ENCODE measurements at regions of chr5 and their contacts with region 1.

Region 1: DNA sequence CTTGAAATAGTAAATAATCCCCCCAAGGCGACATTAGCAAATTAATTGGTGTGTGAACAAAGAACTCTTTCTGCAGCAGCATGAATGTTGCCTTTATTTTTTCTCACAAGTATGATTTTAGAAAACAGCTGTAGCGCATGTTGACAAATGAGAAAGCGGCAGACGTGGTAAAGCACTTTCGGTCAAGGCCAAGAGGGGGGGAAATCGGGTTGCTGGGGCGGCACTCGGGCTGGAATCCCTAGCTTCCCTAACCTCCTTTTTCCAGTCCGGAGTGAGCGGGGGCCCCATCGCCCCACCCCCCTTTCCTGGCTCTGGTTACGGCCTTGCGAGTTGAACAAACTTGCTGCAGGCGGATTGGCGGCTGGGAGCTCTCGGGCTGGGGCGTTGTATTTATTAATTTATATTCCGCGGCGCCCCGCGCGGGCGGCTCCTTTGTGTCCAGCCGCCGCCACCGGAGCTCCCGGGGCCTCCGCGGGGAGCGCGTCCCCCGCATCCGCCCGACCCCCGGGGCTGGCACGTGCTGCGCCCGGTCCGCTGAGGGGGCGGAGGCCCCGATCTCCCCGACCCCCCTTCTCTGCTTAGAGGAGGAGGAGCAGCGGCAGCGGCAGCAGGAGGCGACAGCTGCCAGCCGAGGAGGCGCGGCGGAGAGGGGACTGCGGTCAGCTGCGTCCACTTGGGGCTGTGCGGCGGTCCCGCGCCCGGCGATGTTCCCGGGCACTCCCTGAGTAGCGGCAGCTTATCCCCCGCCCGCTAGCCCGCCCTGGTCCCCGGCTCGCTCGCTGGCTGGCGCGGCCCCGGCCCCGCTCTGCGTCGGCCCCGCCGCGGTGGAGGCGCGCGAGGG is at the start of gene RHOBTB3:
- DNase-seq: peak; percentile 80
- H3K4me3 ChIP-seq: peak within 1 kb of the TSS; percentile 91
- H3K27ac ChIP-seq: peak within 1 kb of the TSS; percentile 88
- H3K27me3 ChIP-seq: no peaks in the 10 kb centered on the region
- CTCF ChIP-seq: no peak
- polyA plus RNA-seq, gene RHOBTB3: 303 and 360 TPM in 2 replicates

Region 2: DNA sequence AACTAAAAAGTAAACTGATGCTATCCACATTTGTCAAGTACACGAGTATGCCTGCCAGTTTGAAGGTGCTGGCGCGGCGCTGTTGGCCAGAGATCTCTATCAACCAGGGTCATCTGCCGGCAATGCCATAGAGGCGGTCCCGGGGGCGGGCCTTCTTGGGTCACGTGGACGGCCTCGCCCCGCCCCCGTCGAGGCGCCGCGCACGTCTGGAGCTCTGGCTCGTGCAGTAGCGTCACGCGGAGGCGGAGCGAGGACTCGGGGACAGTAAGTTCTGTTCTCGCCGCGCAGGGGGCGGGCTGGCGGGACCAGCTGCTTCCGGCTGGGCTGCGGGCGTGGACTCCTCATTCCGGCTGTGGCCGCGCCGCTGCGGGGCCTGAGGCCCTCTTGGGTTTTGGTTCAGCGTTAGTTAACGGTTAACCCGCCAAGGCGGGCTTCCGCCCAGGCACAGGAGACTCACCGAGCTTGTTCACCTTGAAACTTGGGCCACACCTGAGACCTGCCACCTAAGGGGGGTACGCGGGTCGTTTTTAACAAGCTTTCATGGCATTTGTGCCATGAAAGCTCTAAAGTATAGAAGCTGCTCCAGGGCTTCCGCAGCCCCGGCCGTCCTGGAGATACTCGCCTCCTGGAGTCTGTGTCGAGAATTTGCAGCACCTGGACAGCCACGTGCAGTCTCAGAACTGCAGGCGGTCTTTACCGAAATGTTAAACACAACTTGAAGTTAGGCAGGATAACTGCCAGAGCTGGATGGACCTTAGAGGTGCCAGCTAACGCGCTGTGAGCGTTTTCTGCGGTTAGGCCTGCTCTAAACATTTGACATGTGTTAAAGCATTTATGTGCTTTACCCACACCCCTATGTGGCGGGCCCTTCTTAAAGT is 84.2 kb before region 1 on chr5 and contains the start of gene RFESD:
- CTCF ChIA-PET with region 1: interaction called, 5 read pairs
- POLR2A ChIA-PET with region 1: interaction called, 33 read pairs
- DNase-seq: peak; percentile 82
- H3K4me3 ChIP-seq: peak within 1 kb of the TSS; percentile 61
- H3K27ac ChIP-seq: peak within 1 kb of the TSS; percentile 82
- H3K27me3 ChIP-seq: no peaks in the 10 kb centered on the region
- CTCF ChIP-seq: 0 out of 2 replicates have a peak, but pooled peaks have one; percentile 18
- polyA plus RNA-seq, gene RFESD: 3.0 and 3.8 TPM in 2 replicates

Region 3: GRCh38 chr5:95669540-95669939 is 61.4 kb before region 1 on chr5:
- CTCF ChIA-PET with region 1: interaction called, 31 read pairs
- POLR2A ChIA-PET with region 1: interaction called, 20 read pairs
- DNase-seq: peak; percentile 97
- H3K4me3 ChIP-seq: no peak overlapping the region
- H3K27ac ChIP-seq: peak overlapping the region; percentile 71
- H3K27me3 ChIP-seq: no peaks in the 10 kb centered on the region
- CTCF ChIP-seq: no peak

Region 4: GRCh38 chr5:95715799-95716461 is 15.0 kb before region 1 on chr5:
- CTCF ChIA-PET with region 1: no interaction called
- POLR2A ChIA-PET with region 1: no interaction called
- DNase-seq: no peak
- H3K4me3 ChIP-seq: no peak overlapping the region
- H3K27ac ChIP-seq: no peak overlapping the region
- H3K27me3 ChIP-seq: no peaks in the 10 kb centered on the region
- CTCF ChIP-seq: no peak

Region 5: DNA sequence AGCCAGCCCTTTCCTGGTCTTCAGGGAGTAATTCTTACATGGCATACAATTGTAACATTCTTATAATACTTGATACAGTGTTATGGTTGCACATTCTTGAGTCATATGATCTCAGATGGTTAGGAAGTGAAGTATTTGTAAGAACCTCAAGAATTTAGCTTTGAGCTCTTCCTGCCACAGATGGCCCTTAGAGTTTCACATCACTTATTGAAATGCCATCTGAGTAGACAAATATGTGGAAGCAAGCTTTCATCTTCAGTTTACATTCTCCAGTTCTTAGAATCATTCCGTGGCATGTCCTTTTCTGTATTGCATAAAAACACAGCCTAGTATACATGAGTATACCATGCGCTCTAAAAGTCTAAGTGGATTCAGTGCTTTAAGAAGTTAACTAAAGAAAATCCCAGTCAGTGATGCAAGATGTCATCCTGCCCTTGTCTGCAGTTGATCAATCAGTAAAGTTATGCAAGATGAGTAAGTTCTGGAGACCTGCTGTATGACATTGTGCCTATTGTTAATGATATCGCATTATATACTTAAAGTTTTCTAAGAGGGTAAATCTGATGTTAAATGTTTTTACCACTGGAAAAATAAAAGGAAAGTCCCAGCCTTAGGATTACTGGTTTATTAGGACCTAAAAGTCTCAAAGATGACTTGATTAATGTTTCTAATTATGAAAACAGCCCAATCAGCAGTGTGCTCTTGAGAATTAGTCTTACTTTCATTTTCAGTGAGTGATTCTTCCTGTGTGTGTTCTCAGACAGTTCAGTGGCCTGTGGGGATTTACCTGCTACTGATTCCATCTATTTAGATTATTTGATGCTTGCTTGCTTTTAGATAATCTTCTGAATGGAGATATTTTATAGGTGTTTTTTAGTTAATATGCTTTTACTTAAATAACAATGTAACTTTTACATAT is 29.6 kb after region 1 on chr5:
- CTCF ChIA-PET with region 1: no interaction called
- POLR2A ChIA-PET with region 1: interaction called, 18 read pairs
- DNase-seq: peak; percentile 96
- H3K4me3 ChIP-seq: peak overlapping the region; percentile 17; the same call in 1 of the 2 replicates
- H3K27ac ChIP-seq: peak overlapping the region; percentile 77
- H3K27me3 ChIP-seq: no peaks in the 10 kb centered on the region
- CTCF ChIP-seq: no peak

Region 6: GRCh38 chr5:96017951-96018350 is 287.0 kb after region 1 on chr5:
- CTCF ChIA-PET with region 1: no interaction called
- POLR2A ChIA-PET with region 1: no interaction called
- DNase-seq: peak; percentile 88
- H3K4me3 ChIP-seq: no peak overlapping the region
- H3K27ac ChIP-seq: no peak overlapping the region
- H3K27me3 ChIP-seq: no peaks in the 10 kb centered on the region
- CTCF ChIP-seq: no peak